Activated CD4-positive, alpha-beta memory T cell treated with anti-CD3 and anti-CD28 coated beads for 36 hours (primary cell): ENCODE measurements at regions of chr11 and their contacts with region 1.

Region 1: GRCh38 chr11:125874556-125875124 is 12.8 kb upstream of the HYLS1 start:
- DNase-seq: peak; percentile 51
- H3K4me3 Mint-ChIP-seq: no peak overlapping the region
- H3K27ac Mint-ChIP-seq: no peak overlapping the region
- H3K4me1 Mint-ChIP-seq: no peaks in the 10 kb centered on the region
- H3K27me3 Mint-ChIP-seq: peaks cover 2% of the 10 kb centered on the region

Region 2: DNA sequence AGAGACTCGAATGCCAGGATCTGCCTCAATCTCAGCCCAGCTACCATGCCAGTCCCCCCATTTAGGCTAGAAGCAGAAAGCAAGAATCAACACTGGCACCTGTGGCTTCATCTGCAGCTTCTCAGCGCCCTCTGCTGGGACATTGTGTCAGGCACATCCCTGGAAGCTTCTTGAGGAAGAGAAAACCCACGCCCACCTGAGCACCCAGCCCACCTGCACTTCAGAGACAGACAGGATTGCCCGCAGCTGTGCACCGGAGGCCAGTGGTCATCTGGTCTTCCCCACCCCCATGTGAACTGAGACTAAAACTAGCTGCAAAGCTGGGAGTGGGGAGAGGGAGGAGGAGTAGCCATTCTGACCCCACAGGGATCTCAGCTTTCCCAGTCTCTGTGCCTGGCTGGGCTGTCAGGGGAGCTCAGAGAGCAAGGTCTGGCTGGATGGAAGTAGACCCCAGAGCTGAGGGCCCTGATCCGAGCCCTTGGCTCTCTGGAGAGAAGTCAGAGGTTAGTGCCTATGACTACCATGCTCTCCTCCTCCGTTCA is 445.4 kb before region 1 on chr11:
- CTCF ChIA-PET with region 1: no interaction called
- POLR2A ChIA-PET with region 1: no interaction called
- intact Hi-C with region 1: loop called (anchors 5 kb)
- DNase-seq: peak; percentile 65
- H3K4me3 Mint-ChIP-seq: no peak overlapping the region
- H3K27ac Mint-ChIP-seq: no peak overlapping the region
- H3K4me1 Mint-ChIP-seq: no peaks in the 10 kb centered on the region
- H3K27me3 Mint-ChIP-seq: peaks cover 19% of the 10 kb centered on the region

Region 3: GRCh38 chr11:126318574-126319373 is 444.1 kb after region 1 on chr11:
- CTCF ChIA-PET with region 1: no interaction called
- POLR2A ChIA-PET with region 1: no interaction called
- intact Hi-C with region 1: no loop called
- DNase-seq: peak; percentile 43
- H3K4me3 Mint-ChIP-seq: no peak overlapping the region
- H3K27ac Mint-ChIP-seq: peak overlapping the region; percentile 75
- H3K4me1 Mint-ChIP-seq: peaks cover 30% of the 10 kb centered on the region
- H3K27me3 Mint-ChIP-seq: no peaks in the 10 kb centered on the region